ENCODE measurements at regions of chr11 and their contacts with region 1.

Region 1: DNA sequence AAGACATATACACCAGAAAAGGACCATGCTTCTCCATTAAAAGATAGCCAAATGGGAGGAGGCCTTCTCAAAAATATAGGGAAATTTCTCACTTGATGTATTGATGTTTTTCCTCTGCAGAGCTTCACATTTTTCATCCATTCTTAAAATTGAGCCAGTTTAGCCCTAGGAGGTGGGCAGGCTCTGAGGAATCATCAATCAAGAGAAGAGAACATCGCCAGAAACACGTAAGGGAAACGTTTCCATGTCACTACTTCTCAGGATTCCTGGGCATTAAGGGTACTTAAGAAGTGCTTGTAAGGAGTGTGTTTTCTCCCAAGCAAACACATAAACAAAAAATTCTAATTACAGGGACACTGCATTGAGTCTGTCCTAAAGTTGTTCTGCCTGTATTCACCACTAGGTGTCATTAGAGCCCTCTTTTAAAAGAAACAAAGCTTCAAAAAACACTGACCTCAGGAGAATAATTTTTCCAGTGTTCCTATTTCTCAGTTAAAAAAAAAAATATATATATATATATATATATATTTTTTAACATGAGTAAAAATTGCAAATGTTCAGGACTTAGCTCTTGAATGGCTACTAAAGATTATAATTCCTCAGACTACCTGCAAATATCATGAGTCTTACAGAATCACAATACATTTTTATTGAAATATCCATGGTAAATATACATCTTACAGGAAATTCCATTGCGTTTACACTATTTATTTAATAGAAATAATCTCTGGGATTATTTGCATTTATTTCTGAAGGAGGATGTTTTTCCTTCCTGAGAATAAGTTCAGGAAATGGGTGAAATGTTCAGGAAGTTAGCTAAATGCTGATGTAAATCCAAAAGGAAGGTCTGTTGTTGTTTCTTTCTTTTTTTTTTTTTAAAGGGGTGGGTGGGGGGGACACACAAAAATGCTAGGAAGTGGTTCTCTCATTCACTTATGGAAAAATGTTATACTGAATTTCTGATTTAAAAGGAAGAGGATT is 16.0 kb downstream of the FZD4 start:
- DNase-seq: no peak
- ATAC-seq: peak; percentile 60
- H3K4me3 Mint-ChIP-seq: no peak overlapping the region
- H3K27ac Mint-ChIP-seq: no peak overlapping the region
- H3K4me1 Mint-ChIP-seq: no peaks in the 10 kb centered on the region
- H3K27me3 Mint-ChIP-seq: peaks cover 7% of the 10 kb centered on the region

Region 2: DNA sequence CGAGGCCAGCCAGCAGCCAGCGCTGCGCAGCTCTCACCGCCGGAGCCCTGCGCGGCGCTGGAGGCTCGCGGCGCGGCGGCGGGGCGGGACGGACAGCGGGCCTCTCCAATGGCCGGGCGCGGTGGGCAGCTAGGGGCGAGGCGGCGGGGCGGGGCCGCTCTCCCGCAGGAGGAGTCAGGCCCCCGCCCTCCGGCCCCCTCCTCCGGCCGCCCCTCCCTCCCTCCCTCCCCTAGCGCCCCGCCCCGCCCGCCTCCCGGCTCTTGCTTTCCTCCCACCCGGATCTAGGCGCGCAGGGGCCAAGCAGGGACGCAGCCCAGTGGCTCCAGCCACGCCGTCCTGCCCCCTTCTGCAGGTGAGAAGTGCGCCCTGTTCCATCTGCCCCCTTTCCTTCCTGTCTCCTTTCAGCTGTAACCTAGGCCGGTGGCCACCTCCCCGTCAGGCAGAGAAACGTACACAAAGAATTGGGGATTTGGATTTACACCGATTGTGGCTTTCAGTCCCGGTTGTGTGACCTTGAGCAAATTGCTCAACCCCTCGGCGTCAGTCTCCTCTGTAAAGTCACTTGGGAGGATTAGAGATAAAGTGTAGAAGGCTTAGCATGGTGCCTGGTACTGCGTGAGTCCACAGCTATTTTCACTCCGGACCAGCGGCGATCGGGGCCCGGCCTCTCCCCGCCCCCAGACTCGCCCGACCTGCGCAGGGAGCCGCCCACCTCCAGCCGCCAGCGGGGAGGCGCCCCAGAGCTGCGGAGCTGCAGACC is 16.4 kb after region 1 on chr11 and contains the start of gene FZD4:
- CTCF ChIA-PET with region 1: interaction called, 17 read pairs
- POLR2A ChIA-PET with region 1: no interaction called
- DNase-seq: peak; percentile 63
- ATAC-seq: peak; percentile 93
- H3K4me3 Mint-ChIP-seq: peak within 1 kb of the TSS; percentile 71
- H3K27ac Mint-ChIP-seq: no peak within 1 kb of the TSS
- H3K4me1 Mint-ChIP-seq: peaks cover 13% of the 10 kb centered on the region
- H3K27me3 Mint-ChIP-seq: peaks cover 63% of the 10 kb centered on the region
- total RNA-seq, gene FZD4: not detected

Region 3: GRCh38 chr11:87043894-87044293 is 104.7 kb after region 1 on chr11:
- CTCF ChIA-PET with region 1: no interaction called
- POLR2A ChIA-PET with region 1: no interaction called
- DNase-seq: no peak
- ATAC-seq: no peak
- H3K4me3 Mint-ChIP-seq: no peak overlapping the region
- H3K27ac Mint-ChIP-seq: no peak overlapping the region
- H3K4me1 Mint-ChIP-seq: peaks cover 22% of the 10 kb centered on the region
- H3K27me3 Mint-ChIP-seq: no peaks in the 10 kb centered on the region

Region 4: GRCh38 chr11:87290304-87290922 is 351.2 kb after region 1 on chr11:
- CTCF ChIA-PET with region 1: interaction called, 13 read pairs
- POLR2A ChIA-PET with region 1: no interaction called
- DNase-seq: no peak
- ATAC-seq: no peak
- H3K4me3 Mint-ChIP-seq: no peak overlapping the region
- H3K27ac Mint-ChIP-seq: no peak overlapping the region
- H3K4me1 Mint-ChIP-seq: no peaks in the 10 kb centered on the region
- H3K27me3 Mint-ChIP-seq: no peaks in the 10 kb centered on the region

Region 5: DNA sequence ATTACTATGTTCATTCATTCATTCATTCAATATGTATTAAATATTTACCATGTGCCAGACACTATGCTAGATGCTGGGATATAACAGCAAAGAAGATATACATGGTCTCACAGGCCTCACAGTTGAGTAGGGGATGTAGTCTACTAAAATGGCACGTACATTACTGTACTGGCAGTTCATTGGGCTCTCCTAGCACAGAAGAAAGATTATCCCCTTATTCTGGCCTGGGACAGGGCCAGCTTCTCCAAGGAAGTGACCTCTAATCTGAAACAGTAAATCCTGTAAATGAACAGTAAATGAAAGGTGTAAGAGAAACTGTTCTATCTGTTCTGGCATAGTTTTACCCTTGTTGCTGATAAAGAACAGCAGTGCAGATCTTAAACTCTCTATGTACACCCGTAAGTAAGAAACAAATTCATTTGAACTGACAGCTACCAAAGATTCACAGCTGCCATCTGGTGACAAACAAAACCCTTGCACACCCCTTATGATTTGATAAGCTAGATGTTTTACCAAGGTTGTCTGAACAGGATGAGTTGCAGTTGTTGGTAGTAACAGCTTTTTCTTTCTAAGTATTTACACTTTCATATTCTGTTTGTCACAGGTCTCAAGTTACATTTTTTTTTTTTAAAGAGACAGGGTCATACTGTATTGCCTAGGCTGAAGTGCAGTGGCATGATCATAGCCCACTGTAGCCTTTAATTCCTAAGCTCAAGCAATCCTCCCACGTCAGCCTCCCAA is 361.6 kb after region 1 on chr11:
- CTCF ChIA-PET with region 1: interaction called, 12 read pairs
- POLR2A ChIA-PET with region 1: no interaction called
- DNase-seq: no peak
- ATAC-seq: no peak
- H3K4me3 Mint-ChIP-seq: no peak overlapping the region
- H3K27ac Mint-ChIP-seq: no peak overlapping the region
- H3K4me1 Mint-ChIP-seq: peaks cover 11% of the 10 kb centered on the region
- H3K27me3 Mint-ChIP-seq: no peaks in the 10 kb centered on the region

Region 6: GRCh38 chr11:87421422-87421821 is 482.2 kb after region 1 on chr11:
- CTCF ChIA-PET with region 1: interaction called, 11 read pairs
- POLR2A ChIA-PET with region 1: no interaction called
- DNase-seq: peak; percentile 48
- ATAC-seq: no peak
- H3K4me3 Mint-ChIP-seq: no peak overlapping the region
- H3K27ac Mint-ChIP-seq: no peak overlapping the region
- H3K4me1 Mint-ChIP-seq: no peaks in the 10 kb centered on the region
- H3K27me3 Mint-ChIP-seq: no peaks in the 10 kb centered on the region

Measured in activated CD8-positive, alpha-beta T cell treated with anti-CD3 and anti-CD28 coated beads, Interleukin-2, amount 10 ng/mL, durations not matched to agents 7 days and 5 days (primary cell).